Prostate gland (tissue), 2 donors: ENCODE measurements at regions of chr13 and their contacts with region 1.

Region 1: GRCh38 chr13:28792992-28793391 is 27.1 kb upstream of the MTUS2 start:
- DNase-seq: no peak
- H3K4me3 ChIP-seq: no peak overlapping the region
- H3K27ac ChIP-seq: no peak overlapping the region
- H3K4me1 ChIP-seq: no peaks in the 10 kb centered on the region
- H3K27me3 ChIP-seq: no peaks in the 10 kb centered on the region
- CTCF ChIP-seq: no peak
- POLR2A ChIP-seq: no peak

Region 2: GRCh38 chr13:28679628-28680027 is 113.4 kb before region 1 on chr13:
- intact Hi-C with region 1: loop called (anchors 10 kb)
- DNase-seq: no peak
- H3K4me3 ChIP-seq: no peak overlapping the region
- H3K27ac ChIP-seq: no peak overlapping the region
- H3K4me1 ChIP-seq: no peaks in the 10 kb centered on the region
- H3K27me3 ChIP-seq: no peaks in the 10 kb centered on the region
- CTCF ChIP-seq: peak in 2 of 4 experiments; percentile 15 to 31
- POLR2A ChIP-seq: no peak

Region 3: DNA sequence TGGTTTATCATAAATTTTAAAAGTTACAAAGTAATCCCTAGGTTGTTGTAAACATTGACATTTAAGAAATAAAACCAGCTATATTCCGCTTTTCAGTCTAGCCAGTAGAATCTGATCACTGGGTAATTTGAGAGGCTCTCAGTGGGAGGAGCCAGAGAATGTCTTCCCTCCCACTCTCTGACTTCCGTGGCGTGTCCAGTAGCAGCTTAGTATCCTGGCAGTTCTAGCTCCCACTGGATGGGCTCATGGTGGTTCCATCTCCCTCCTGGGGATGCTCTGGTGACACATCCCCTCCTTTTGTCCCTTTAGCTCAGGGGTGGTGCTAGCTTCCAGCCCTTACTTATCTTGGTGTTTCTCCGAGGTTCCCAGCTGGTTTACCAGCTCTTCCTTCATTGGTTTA is 61.7 kb after region 1 on chr13:
- intact Hi-C with region 1: no loop called
- DNase-seq: no peak
- H3K4me3 ChIP-seq: no peak overlapping the region
- H3K27ac ChIP-seq: no peak overlapping the region
- H3K4me1 ChIP-seq: no peaks in the 10 kb centered on the region
- H3K27me3 ChIP-seq: no peaks in the 10 kb centered on the region
- CTCF ChIP-seq: no peak
- POLR2A ChIP-seq: no peak